ENCODE measurements at regions of chr14 and their contacts with region 1.

Region 1: DNA sequence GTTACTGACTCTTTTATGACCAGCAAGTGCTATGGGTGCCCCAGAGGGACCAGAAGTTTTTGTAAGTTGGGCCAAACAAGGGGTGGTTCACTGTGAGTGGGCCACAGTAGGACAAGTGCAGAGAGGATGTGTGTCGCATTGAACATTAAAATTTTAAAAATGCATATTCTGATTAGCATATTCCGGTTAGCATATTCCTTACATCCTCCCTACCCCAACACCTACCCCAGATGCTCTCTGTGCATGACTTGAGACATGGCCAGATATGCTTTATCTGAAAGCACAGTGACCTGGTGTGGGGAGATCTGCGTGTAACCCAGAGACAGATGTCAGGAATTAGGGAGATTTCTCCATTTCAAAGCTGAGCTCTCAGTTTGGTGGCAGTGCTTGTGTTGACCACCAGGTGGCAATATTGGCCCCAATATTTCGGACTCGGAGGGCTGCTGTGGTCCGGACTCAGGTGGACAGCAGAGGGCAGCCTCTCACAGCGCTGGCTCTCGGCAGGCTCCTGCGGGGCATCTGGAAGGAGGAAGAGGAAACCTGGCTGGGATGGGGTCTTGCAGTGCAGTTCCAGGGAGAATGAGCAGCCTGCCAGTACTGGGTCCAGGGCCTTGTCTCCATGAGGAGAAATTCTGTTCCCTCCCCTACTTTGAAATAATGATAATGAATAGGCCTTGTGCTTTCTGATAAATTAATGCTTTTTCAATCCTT is 1.6 kb upstream of the CEBPE start:
- DNase-seq: peak; percentile 94

Region 2: GRCh38 chr14:23068476-23069412 is 52.0 kb before region 1 on chr14:
- CTCF ChIA-PET with region 1: interaction called, 12 read pairs
- POLR2A ChIA-PET with region 1: no interaction called
- DNase-seq: peak; percentile 83

Region 3: GRCh38 chr14:23086565-23086964 is 34.1 kb before region 1 on chr14:
- CTCF ChIA-PET with region 1: no interaction called
- POLR2A ChIA-PET with region 1: no interaction called
- DNase-seq: no peak

Region 4: GRCh38 chr14:23141671-23142451 is 21.2 kb after region 1 on chr14:
- CTCF ChIA-PET with region 1: interaction called, 27 read pairs
- POLR2A ChIA-PET with region 1: no interaction called
- DNase-seq: no peak

Region 5: DNA sequence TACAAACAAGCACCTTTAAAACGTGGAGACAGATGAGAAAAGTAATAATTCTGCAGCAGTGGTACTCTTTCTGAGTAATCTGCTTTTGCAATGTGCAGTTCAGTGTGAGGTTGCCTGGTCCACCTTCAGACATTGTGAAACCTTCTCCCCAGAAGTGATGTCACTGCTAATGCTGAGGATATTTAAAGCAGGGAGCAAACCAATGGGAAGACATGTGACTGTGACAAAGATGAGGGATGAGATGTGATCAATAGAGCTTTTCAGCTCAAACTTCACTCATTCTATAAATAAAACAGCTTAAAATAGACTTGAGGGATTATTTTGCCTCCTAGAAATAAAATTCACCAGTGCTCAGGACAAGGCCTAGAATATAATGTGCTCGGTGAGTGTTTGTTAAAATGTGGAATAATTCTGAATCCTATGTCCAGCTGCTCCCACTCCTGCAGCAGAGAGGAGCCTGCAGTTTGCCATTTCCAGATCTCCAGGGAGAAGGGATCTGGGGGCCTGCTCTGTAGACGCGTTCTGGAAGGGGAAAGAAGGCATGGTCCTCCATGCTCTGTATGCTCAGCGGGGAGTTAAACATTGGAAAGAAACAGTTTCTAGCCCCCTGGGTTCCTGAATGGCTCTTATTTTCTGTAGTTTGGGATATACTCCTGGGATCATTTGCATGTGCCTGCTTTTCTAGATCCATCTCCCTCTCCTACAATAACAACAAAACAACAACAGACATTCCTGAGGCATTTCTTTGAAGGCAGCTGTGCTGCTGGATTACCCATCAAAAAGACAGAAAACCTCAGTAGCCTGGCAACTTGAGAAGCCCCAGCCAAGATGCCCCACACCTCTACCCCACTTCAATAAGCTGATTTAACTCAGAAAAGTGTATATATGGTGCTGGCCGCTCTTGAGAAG is 53.8 kb after region 1 on chr14:
- CTCF ChIA-PET with region 1: interaction called, 34 read pairs
- POLR2A ChIA-PET with region 1: no interaction called
- DNase-seq: no peak

Region 6: DNA sequence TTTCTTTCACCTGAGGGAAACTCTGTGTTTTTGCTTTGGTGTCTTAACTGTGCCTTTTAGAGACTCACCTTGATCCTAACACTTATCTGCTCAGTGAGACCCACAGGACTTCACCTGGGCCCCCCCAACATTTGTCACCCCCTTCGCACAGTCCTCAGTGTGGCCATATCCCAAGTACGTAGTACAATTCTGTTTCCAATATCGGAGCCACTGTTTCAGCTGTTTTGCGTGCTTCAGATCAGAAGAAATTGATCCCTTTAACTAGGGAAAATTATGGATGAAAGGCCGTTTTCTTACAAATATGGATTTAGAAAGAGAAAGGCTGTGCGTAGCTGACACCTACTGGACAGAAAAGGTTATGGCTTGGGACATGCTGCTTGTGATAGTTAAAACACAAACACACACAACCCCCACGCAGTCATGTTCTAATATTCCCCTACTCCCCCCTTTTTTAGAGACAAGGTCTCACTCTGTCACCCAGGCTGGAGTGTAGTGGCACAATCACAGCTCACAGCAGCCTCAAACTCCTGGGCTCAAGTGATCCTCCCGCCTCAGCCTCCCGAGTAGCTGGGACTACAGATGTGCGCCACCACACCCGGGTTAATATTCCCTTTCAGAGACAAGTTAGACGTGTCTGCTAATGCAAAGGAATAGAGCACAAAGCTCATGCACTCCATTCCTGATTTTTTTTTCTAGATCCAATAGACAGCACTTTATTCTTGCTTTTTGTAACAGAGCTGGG is 66.4 kb after region 1 on chr14:
- CTCF ChIA-PET with region 1: interaction called, 145 read pairs
- POLR2A ChIA-PET with region 1: interaction called, 14 read pairs
- DNase-seq: peak; percentile 63

Region 7: GRCh38 chr14:23195550-23196101 is 74.9 kb after region 1 on chr14:
- CTCF ChIA-PET with region 1: interaction called, 145 read pairs
- POLR2A ChIA-PET with region 1: no interaction called
- DNase-seq: no peak